B cell (primary cell): ENCODE measurements at regions of chr20 and their contacts with region 1.

Region 1: DNA sequence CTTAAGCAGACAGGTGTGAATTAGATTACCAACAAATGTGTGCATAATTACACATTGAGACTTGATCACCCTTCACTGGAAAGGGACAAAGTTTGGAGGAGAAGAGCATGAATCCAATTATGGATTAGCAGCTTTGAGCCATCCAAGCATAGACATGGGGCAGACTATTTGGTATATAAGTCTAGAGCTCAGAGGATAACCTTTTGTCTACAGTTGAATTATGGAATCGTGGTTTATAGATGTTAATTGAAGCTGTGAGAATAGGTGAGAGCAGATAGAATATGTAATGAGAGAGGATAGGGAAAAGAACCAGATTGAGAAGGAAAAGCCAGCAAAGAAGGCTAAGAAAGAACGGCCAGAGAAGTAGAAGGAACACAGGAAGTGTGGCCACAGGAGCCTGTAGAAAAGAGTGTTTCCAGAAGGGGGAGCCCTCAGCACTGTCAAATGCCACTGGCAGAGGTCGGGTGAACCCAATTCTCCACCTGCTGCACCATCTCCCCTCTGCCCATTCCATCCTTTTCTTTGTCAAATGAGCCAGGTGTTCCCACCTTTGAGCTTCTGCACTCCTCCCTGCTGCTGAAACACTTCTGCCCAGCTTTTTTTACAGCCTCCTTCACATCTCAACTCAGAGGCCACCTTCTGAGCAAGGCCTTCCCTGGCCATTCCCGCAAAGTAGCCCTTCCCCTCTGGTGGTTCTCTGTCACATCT is 7.3 kb downstream of the DNTTIP1 start:
- DNase-seq: peak; percentile 72
- ATAC-seq: peak; percentile 83
- H3K4me3 ChIP-seq: no peak overlapping the region
- H3K4me3 Mint-ChIP-seq: no peak overlapping the region
- H3K27ac ChIP-seq: peak overlapping the region; percentile 8 to 16
- H3K27ac Mint-ChIP-seq: peak overlapping the region; percentile 0
- H3K4me1 ChIP-seq: peaks cover 3 to 10% of the 10 kb centered on the region in 2 donors
- H3K4me1 Mint-ChIP-seq: peaks cover 8% of the 10 kb centered on the region
- H3K27me3 ChIP-seq: no peaks in the 10 kb centered on the region
- H3K27me3 Mint-ChIP-seq: no peaks in the 10 kb centered on the region
- CTCF ChIP-seq: peak; percentile 83

Region 2: GRCh38 chr20:45833030-45833882 is 34.2 kb after region 1 on chr20 and contains the start of gene SNX21:
- CTCF ChIA-PET with region 1: no interaction called
- POLR2A ChIA-PET with region 1: no interaction called
- intact Hi-C with region 1: no loop called
- DNase-seq: peak; percentile 48
- ATAC-seq: peak; percentile 77
- H3K4me3 ChIP-seq: peak within 1 kb of the TSS; percentile 47 to 82 (median 67)
- H3K4me3 Mint-ChIP-seq: peak within 1 kb of the TSS; percentile 83
- H3K27ac ChIP-seq: peak within 1 kb of the TSS in 1 of 2 donors; percentile 55
- H3K27ac Mint-ChIP-seq: peak within 1 kb of the TSS; percentile 53
- H3K4me1 ChIP-seq: peaks cover 6 to 18% of the 10 kb centered on the region in 2 donors
- H3K4me1 Mint-ChIP-seq: peaks cover 12% of the 10 kb centered on the region
- H3K27me3 ChIP-seq: no peaks in the 10 kb centered on the region
- H3K27me3 Mint-ChIP-seq: no peaks in the 10 kb centered on the region
- CTCF ChIP-seq: no peak
- total RNA-seq, gene SNX21: 1.7 and 2.4 TPM in 2 replicates

Region 3: GRCh38 chr20:45963059-45964005 is 164.2 kb after region 1 on chr20:
- CTCF ChIA-PET with region 1: interaction called, 57 read pairs
- POLR2A ChIA-PET with region 1: no interaction called
- intact Hi-C with region 1: loop called (anchors 1 kb)
- DNase-seq: peak; percentile 56
- ATAC-seq: peak; percentile 11
- H3K4me3 ChIP-seq: no peak overlapping the region
- H3K4me3 Mint-ChIP-seq: no peak overlapping the region
- H3K27ac ChIP-seq: no peak overlapping the region
- H3K27ac Mint-ChIP-seq: peak overlapping the region; percentile 64
- H3K4me1 ChIP-seq: peaks cover 0 to 9% of the 10 kb centered on the region in 2 donors
- H3K4me1 Mint-ChIP-seq: peaks cover 10% of the 10 kb centered on the region
- H3K27me3 ChIP-seq: no peaks in the 10 kb centered on the region
- H3K27me3 Mint-ChIP-seq: no peaks in the 10 kb centered on the region
- CTCF ChIP-seq: no peak

Region 4: GRCh38 chr20:46013826-46014516 is 214.9 kb after region 1 on chr20:
- CTCF ChIA-PET with region 1: interaction called, 7 read pairs
- POLR2A ChIA-PET with region 1: no interaction called
- intact Hi-C with region 1: loop called (anchors 1 kb)
- DNase-seq: peak; percentile 87
- ATAC-seq: peak; percentile 88
- H3K4me3 ChIP-seq: peak overlapping the region in 4 of 5 experiments; percentile 19 to 47 (median 35)
- H3K4me3 Mint-ChIP-seq: peak overlapping the region; percentile 72
- H3K27ac ChIP-seq: no peak overlapping the region
- H3K27ac Mint-ChIP-seq: peak overlapping the region; percentile 63
- H3K4me1 ChIP-seq: peaks cover 48 to 49% of the 10 kb centered on the region in 2 donors
- H3K4me1 Mint-ChIP-seq: peaks cover 49% of the 10 kb centered on the region
- H3K27me3 ChIP-seq: peaks cover 0 to 57% (median 29%) of the 10 kb centered on the region in 4 experiments
- H3K27me3 Mint-ChIP-seq: peaks cover 59% of the 10 kb centered on the region
- CTCF ChIP-seq: peak; percentile 89

Region 5: DNA sequence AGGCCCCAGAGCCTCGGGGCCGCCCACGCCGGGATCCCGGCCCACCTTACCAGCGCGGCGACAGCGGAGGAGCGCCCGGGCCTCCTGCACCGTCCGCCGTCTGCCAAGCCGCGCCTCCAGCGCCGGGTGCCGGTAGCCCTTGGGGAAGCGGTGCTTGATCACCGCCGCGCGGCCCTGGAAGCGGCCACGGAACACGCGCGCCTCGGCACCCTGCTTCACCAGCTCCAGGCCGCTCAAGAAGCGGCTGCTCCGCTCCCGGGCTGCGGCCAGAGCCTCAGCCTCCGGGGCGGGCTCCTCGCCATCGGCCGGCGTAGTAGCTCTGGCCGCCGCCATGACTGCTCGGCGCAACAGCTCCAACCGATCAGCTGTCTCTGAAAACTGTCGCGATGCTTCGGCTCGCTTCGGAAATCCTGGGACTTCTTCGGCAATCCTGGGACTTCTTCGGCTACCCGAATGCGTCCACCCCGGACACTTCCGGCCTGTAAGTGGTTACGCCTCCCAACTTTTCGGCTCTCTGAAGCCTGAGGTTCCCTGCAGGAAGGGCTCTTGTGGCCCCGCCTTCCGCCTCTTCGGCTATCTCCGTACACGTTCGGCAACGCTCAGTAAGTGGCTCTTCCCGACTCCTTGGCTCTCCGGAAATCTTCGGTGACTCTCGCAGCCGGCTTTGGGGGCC is 890.1 kb after region 1 on chr20 and contains the start of gene TP53RK:
- CTCF ChIA-PET with region 1: no interaction called
- POLR2A ChIA-PET with region 1: no interaction called
- intact Hi-C with region 1: loop called (anchors 10 kb)
- DNase-seq: peak; percentile 97
- ATAC-seq: peak; percentile 97
- H3K4me3 ChIP-seq: peak within 1 kb of the TSS; percentile 87 to 95 (median 93)
- H3K4me3 Mint-ChIP-seq: peak within 1 kb of the TSS; percentile 99
- H3K27ac ChIP-seq: peak within 1 kb of the TSS; percentile 76 to 80
- H3K27ac Mint-ChIP-seq: peak within 1 kb of the TSS; percentile 98
- H3K4me1 ChIP-seq: peaks cover 20 to 21% of the 10 kb centered on the region in 2 donors
- H3K4me1 Mint-ChIP-seq: peaks cover 40% of the 10 kb centered on the region
- H3K27me3 ChIP-seq: no peaks in the 10 kb centered on the region
- H3K27me3 Mint-ChIP-seq: no peaks in the 10 kb centered on the region
- CTCF ChIP-seq: peak; percentile 34
- total RNA-seq, gene TP53RK: 22.5 and 24.0 TPM in 2 replicates